Head of caudate nucleus (tissue), 42 donors: ENCODE measurements at regions of chr7 and their contacts with region 1.

Region 1: DNA sequence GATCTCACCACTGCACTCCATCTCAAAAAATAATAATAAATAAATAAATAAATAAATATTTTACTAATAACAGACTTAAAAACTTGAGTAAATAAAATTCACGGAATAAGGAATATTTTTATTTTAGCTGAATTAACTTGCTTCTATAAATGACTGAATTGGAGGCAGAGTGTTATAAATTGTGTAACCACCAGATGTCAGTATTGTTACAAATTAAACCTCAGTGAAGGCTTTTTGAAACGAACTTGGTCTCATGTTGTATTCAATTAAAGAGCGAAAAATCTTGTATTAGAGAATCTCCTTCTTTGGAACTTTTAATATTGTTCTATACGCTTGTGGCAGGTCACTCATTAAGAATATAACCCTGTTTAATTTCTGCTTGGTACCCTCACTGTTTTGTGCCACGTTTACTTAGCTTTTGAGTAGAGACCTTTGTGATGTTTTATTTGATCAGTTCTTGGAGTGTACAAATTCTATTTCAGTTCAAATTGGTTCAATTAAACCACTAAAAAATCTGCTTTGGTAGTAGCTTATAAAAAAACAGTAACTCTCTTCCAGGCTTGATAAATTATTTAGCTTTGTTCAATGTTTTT is 45.6 kb upstream of the SCIN start:
- DNase-seq: peak in 1 of 42 donors; percentile 14

Region 2: DNA sequence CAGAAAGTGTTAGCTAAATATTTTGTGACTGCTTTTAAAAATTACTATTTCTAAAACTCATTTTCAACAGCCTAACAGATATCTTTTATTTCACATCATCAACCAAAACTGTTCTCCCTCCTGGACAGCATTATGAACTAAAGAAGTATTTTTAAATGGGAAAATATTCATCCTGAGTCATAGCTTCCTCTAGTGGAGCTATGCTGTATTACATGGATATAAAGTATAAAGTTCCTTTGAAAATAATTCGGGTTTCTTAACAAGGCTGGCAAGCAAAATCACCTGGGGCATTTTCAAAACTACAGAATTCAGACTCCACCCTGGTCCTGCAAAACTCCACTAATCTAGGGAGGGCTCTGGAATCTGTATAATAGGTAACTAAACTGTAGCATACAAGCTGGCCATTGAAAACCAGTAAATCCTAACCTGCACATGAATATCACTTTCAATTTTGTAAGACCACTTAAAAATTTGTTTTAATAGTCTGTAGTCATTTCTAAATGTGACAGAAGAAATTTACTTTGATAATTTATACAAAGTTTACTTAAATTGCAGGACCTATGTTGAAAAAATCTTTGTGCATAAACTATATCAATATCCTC is 99.1 kb after region 1 on chr7:
- intact Hi-C with region 1: loop called (anchors 10 kb)
- DNase-seq: no peak

Region 3: DNA sequence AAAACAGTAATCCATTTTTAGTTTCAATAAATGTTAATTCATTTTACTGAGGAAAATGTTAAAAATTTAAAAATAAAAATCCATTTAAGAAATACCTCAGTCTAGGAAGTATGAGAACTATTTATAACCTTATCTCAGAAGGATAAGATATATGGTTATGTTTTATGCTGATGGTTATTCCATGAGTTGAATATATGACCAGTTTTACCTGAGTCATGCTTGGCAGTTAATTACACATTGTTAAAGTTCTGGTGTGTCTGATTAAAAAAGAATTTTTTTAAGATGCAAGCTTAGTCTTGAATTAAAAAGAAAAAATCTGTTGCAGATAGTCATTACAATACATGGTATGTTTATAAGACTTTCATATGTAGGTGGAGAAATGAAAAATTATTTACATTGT is 354.2 kb after region 1 on chr7:
- intact Hi-C with region 1: no loop called
- DNase-seq: no peak